ENCODE measurements at regions of chr7 and their contacts with region 1.

Region 1: DNA sequence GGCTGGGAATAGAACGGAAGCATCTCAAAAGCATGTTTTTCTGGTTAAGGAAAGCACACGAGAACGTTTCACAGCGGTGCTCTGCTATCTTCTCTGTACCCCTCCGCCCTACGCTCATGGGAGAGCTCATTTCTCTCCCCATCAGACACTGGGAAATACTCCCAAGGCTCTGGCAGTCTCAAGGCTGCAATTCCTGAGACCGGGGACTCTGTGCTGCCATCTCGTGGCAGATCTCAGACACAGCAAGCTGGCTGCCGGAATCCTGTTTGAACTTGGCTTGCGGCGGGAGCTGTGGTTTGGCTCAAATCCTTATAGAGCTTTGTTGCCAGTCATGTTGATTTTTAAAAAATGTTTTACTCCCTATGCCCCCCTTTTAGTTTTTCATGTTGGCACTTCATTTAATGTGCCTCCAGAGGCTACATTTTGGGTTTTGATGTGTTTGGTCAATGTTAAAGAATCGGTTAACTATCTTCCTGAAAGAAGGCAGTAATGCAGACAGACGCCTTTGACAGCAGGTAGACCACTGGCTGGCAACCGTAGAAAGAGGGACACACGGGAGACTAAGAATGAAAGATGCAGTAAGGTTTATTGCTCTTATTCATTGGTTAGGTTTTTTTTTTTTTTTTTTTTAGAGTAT is 27.6 kb downstream of the BMPER start:
- DNase-seq: peak; percentile 63 to 79
- ATAC-seq: peak; percentile 79 to 94
- H3K4me3 ChIP-seq: no peak overlapping the region
- H3K27ac ChIP-seq: peak overlapping the region; percentile 56 to 77
- H3K4me1 ChIP-seq: peaks cover 19% of the 10 kb centered on the region
- CTCF ChIP-seq: peak; percentile 88
- EP300 ChIP-seq: no peak
- POLR2A ChIP-seq: no peak
- RAD21 ChIP-seq: peak; percentile 70 to 81

Region 2: DNA sequence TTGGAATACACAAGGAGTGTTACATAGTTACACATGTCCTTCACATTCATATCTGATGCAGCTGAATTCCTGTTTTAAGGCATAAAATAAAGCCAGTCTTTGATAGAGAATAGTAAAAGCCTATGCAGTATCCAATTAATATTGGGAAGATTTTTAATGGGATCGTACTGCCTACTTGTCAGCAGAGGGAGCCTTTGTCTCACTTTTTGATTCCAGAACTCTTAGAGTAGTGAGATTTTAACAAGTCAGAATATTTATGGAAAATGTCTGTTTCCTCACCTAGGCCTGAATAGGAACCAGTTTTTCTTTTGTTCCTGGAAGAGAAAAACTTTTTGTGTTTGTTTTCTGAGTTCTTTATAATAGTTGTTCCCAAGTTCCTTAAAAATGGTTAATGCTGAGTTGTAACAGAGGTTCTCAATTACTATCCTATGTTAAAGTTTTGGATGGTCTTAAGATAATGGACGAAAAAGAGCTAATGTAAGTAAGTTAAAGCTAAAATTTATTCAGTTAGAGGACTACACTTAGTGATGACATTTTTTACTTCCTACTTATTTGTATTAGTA is 689.5 kb before region 1 on chr7:
- CTCF ChIA-PET with region 1: interaction called, 18 read pairs
- POLR2A ChIA-PET with region 1: no interaction called
- DNase-seq: peak; percentile 36 to 57
- ATAC-seq: peak; percentile 73 to 86; a peak in 4 of 6 replicates
- H3K4me3 ChIP-seq: no peak overlapping the region
- H3K27ac ChIP-seq: no peak overlapping the region
- H3K4me1 ChIP-seq: peaks cover 4% of the 10 kb centered on the region; the same call in 1 of the 3 replicates
- CTCF ChIP-seq: peak; percentile 88
- EP300 ChIP-seq: no peak
- POLR2A ChIP-seq: no peak
- RAD21 ChIP-seq: peak; percentile 87 to 88

Region 3: DNA sequence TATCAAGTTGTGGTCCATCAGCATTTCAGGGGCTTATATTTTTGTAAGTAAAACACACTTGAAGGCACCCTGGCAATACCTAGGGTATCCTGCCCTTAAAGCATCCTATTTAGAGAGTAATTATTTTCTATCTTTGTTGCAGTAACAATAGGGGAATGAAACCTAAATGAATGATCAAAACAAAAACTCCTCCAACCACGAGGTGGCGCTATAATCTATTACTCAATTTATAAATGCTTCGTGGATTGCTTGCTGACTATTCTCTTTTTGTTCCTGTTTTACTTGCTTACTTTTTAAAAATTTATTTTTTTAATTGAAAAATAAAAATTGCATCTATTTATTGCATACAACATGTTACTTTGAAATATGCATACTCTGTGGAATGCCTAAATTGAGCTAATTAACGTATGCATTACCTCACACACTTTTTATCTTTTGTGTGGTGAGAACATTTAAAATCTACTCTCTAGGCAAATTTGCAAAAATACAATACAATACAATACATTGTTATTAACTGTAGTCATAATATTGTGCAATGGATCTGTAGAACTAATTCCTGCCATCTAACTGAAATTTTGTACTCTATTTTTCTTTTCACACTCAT is 175.3 kb before region 1 on chr7:
- CTCF ChIA-PET with region 1: interaction called, 11 read pairs
- POLR2A ChIA-PET with region 1: no interaction called
- DNase-seq: peak; percentile 16 to 40
- ATAC-seq: no peak
- H3K4me3 ChIP-seq: no peak overlapping the region
- H3K27ac ChIP-seq: no peak overlapping the region
- H3K4me1 ChIP-seq: 0 out of 3 replicates have a peak, but pooled peaks cover 4% of the 10 kb centered on the region
- CTCF ChIP-seq: peak; percentile 70
- EP300 ChIP-seq: no peak
- POLR2A ChIP-seq: no peak
- RAD21 ChIP-seq: peak; percentile 54 to 62

Region 4: DNA sequence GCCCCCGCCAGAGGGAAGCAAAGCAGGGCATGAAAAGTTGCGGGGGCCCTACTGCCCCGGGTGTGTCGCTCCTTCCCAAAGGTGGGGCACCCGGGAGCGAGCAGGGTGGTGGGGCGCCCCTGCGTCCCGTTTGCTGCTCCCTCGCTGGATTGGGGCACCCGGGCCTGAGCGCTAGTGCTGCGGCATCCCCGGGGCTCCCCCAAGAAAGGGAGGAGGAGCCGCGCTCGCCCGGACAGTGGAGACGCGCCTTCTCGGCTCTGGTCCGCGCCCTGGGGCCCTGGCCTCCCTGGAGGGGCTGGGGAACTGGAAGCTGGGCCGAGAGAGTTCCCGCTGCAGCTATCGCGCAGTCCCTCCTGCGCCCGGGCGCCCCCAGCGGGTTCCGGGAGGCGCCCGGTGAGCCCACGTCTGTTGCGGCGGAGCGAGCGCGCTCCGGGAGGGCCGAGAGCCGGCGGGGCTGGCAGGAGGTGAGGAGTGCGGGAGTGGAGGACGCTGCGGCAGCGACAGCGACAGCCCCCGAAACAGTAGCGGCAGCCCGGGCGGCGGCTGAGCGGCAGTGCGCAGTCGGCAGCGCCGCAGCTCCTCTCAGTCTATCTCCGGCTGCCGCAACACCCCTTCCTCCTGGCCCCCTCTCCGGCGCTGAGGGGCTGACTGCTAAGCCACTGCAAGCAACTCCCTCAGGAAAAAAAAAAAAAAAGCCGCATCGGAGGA is 28.1 kb before region 1 on chr7:
- CTCF ChIA-PET with region 1: interaction called, 53 read pairs
- POLR2A ChIA-PET with region 1: no interaction called
- DNase-seq: peak; percentile 46 to 48
- ATAC-seq: peak; percentile 91 to 92
- H3K4me3 ChIP-seq: peak overlapping the region; percentile 67
- H3K27ac ChIP-seq: peak overlapping the region; percentile 87 to 95
- H3K4me1 ChIP-seq: peaks cover 34% of the 10 kb centered on the region
- CTCF ChIP-seq: no peak; the same call in 2 of the 3 replicates
- EP300 ChIP-seq: no peak
- POLR2A ChIP-seq: peak; percentile 30; the same call in 1 of the 2 replicates
- RAD21 ChIP-seq: peak; percentile 4 to 31; a peak in 1 of 5 replicates

Region 5: DNA sequence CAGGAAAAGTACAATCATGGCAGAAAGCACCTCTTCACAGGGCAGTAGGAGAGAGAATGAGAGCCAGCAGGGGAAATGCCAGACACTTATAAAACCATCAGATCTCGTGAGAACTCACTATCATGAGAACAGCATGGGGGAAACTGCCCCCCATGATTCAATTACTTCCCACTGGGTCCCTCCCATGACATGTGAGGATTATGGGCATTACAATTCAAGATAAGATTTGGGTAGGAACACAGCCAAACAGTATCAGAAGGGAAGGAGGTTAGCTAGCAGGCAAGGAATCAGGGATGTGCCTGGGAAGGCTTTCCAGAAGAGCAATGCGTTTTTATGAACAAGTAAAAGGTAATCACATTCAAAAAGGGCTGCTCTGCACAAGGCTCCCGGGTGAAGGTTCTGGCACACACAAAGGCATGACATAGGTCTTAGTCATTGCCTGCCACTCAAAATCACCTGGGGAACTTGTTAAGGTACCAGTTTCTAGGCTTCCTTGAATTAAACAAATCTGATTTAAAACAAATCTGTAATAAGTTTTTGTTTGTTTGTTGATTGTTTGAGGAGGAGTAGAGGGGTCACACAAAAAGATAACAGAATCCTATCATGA is 13.2 kb after region 1 on chr7:
- CTCF ChIA-PET with region 1: interaction called, 22 read pairs
- POLR2A ChIA-PET with region 1: no interaction called
- DNase-seq: no peak
- ATAC-seq: no peak
- H3K4me3 ChIP-seq: no peak overlapping the region
- H3K27ac ChIP-seq: no peak overlapping the region
- H3K4me1 ChIP-seq: no peaks in the 10 kb centered on the region
- CTCF ChIP-seq: no peak
- EP300 ChIP-seq: no peak
- POLR2A ChIP-seq: no peak
- RAD21 ChIP-seq: no peak

Region 6: GRCh38 chr7:33982425-33982786 is 49.5 kb after region 1 on chr7:
- CTCF ChIA-PET with region 1: interaction called, 14 read pairs
- POLR2A ChIA-PET with region 1: no interaction called
- DNase-seq: peak in 1 of 2 experiments; percentile 67
- ATAC-seq: no peak
- H3K4me3 ChIP-seq: no peak overlapping the region
- H3K27ac ChIP-seq: peak overlapping the region; percentile 92 to 94
- H3K4me1 ChIP-seq: peaks cover 69% of the 10 kb centered on the region
- CTCF ChIP-seq: peak; percentile 50
- EP300 ChIP-seq: no peak
- POLR2A ChIP-seq: no peak
- RAD21 ChIP-seq: peak; percentile 66 to 75

Measured in A549 (cell line).